PC-9 (cell line): ENCODE measurements at regions of chr7 and their contacts with region 1.

Region 1: GRCh38 chr7:103031024-103031423 is 43.6 kb downstream of the FBXL13 start:
- DNase-seq: no peak
- H3K4me3 ChIP-seq: no peak overlapping the region
- H3K27ac ChIP-seq: no peak overlapping the region
- H3K4me1 ChIP-seq: no peaks in the 10 kb centered on the region
- H3K27me3 ChIP-seq: no peaks in the 10 kb centered on the region
- CTCF ChIP-seq: no peak

Region 2: DNA sequence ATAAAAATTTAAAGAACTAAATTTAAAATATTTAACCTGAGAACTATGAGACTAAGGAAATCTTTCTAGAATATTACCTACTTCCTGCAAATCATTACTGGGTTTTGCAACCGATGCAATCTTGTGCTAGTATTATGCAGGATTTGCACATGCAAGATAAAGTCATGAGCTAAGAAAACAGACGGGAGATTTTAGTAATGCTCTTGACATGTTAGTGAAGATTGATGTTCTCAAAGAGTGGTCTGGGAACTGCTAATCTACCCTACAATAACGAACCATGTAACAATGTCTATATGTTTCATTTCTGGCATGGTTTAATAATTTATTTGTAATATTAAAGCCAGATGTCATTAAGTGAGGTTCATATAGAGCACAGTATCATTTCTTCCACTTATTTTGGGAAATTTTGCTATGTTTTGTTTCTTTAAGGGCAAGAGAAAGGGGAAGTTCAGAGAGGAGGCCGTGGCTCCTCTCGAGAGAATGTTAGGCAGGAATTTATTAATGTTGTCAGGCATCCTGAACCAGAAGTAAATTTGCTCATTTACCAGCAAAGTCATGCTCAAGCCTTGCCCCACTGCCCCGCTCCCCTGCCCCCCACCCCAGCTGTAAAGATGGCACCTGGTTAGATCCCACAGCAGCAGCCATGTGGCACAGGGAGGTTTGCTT is 95.4 kb before region 1 on chr7:
- CTCF ChIA-PET with region 1: interaction called, 16 read pairs
- POLR2A ChIA-PET with region 1: no interaction called
- intact Hi-C with region 1: no loop called
- DNase-seq: no peak
- H3K4me3 ChIP-seq: no peak overlapping the region
- H3K27ac ChIP-seq: no peak overlapping the region
- H3K4me1 ChIP-seq: no peaks in the 10 kb centered on the region
- H3K27me3 ChIP-seq: no peaks in the 10 kb centered on the region
- CTCF ChIP-seq: no peak